ENCODE measurements at regions of chr20 and their contacts with region 1.

Region 1: DNA sequence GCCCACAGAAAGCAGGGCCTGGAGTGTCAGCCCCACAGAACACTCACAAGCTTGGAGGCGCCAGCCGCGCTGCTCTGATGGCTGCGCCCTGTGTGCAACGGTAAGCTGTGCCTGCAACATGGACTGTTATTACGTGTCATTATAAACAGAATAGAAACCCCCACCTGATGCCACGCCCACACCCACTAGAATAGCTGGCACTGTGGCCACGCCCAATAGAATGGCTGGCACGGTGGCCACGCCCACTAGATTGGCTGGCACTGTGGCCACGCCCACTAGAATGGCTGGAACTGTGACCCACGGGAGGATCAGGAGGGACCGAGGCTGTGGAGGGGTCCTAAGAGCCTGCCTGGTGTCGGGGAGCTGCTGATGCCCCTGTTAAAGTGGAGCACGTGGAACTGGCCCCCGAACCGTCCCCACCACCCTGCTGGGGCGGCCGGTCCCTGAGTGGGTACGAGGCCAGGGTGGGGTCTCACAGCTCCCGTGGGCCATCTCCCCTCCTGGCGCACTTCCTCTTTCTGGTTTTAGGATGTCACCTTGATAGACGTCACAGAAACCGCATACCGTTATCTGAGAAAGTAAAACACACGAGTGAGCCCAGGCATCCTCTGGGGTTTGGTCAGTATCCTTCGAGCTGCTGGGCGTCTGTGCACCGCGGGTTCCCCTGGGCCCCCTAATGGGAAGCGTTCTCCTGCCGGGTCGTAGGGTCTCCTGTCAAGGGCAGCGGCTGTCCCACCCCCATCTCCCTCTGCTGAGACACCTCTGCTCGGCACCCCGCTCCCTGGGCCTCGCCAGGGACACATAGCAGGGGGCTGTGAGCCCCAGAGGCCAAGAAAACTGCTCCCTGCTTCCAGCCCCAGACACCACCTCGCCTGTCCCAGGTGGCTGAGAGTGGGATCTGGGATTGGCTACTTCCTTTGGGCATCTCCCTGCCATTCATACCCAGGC is 25.4 kb downstream of the SLC17A9 start:
- DNase-seq: peak; percentile 84
- ATAC-seq: peak; percentile 81
- H3K4me3 Mint-ChIP-seq: peak overlapping the region; percentile 67
- H3K27ac Mint-ChIP-seq: peak overlapping the region; percentile 70
- H3K4me1 Mint-ChIP-seq: peaks cover 51% of the 10 kb centered on the region
- H3K27me3 Mint-ChIP-seq: peaks cover 23% of the 10 kb centered on the region
- CTCF ChIP-seq: no peak

Region 2: DNA sequence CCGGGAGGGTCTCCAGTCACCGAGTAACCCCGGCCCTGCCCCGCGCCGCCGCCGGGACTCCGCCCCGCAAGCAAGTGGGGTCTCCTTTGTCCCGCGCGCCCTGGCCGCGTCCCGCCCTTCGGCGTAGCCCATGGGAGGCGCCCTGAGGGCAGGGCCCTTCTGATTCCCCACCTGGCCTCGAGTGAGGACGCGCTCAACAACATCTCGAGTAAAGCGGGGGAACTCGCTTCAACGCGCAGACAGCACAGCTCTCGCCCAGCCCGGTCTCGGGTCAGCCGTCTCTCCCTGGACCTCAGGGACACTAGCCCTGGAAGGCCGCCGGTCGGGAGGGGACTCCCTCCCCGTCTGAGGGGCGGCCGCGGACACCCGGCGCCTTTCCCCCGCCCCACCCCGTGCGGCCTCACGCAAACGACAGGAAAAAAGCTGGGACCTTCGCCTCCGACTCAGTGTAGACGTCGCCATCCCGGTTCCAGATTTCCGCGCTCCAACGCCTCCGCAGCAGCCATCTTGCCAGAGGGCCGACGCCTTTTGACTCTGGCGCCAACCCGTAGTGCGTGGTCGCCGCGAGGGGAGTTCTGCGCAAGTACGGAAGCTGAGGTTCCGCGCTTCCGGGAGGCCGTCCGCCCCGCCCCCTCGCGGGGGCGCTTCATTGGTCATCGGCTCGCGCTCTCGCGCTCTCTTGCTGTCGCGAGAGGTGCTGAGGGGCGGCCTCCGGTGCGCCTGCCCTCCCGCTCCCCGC is 40.4 kb before region 1 on chr20:
- CTCF ChIA-PET with region 1: no interaction called
- POLR2A ChIA-PET with region 1: interaction called, 10 read pairs
- intact Hi-C with region 1: loop called (anchors 2 kb)
- DNase-seq: peak; percentile 97
- ATAC-seq: peak; percentile 88
- H3K4me3 Mint-ChIP-seq: peak overlapping the region; percentile 94
- H3K27ac Mint-ChIP-seq: peak overlapping the region; percentile 94
- H3K4me1 Mint-ChIP-seq: peaks cover 42% of the 10 kb centered on the region
- H3K27me3 Mint-ChIP-seq: no peaks in the 10 kb centered on the region
- CTCF ChIP-seq: no peak

Region 3: GRCh38 chr20:63025534-63026331 is 47.8 kb after region 1 on chr20:
- CTCF ChIA-PET with region 1: no interaction called
- POLR2A ChIA-PET with region 1: no interaction called
- intact Hi-C with region 1: no loop called
- DNase-seq: no peak
- ATAC-seq: no peak
- H3K4me3 Mint-ChIP-seq: no peak overlapping the region
- H3K27ac Mint-ChIP-seq: no peak overlapping the region
- H3K4me1 Mint-ChIP-seq: no peaks in the 10 kb centered on the region
- H3K27me3 Mint-ChIP-seq: peaks cover 44% of the 10 kb centered on the region
- CTCF ChIP-seq: no peak

Measured in activated B cell treated with CpG ODN at 0.5 μM for 24 hours (primary cell).